ENCODE measurements at regions of chr10 and their contacts with region 1.

Region 1: DNA sequence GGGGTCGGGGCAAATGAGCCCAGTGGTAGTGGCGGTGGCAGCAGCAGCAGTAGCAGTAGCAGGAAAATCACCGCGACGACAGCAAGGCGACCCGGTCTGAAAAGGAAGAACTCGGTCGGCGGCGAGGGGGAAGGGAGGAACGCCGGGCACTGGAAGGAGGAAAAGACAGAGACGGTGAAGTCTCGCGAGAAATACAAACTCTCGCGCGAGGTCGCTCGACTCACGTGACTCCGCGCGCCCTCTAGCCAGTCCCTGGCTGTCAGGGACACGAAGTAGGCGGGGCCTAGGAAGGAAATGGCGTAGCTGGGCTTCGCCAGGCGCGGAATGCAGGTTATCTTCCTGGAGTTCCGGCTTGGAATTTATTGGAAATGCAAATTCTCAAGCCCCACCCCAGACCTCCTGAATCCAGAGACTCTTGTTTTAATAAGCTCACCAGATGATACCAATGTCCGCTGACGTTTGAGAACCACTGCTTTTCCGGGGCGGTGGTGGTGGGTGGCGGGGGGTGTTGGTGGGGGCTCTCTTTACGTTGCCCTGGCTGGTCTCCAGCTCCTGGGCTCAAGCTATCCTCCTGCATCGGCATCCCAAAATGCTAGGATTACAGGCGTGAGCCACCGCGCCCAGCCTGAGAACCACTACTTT is at the start of gene SMNDC1:
- DNase-seq: peak; percentile 96
- H3K4me3 Mint-ChIP-seq: peak within 1 kb of the TSS; percentile 97
- H3K27ac Mint-ChIP-seq: peak within 1 kb of the TSS; percentile 96
- H3K4me1 Mint-ChIP-seq: peaks cover 48% of the 10 kb centered on the region
- H3K27me3 Mint-ChIP-seq: no peaks in the 10 kb centered on the region
- total RNA-seq, gene SMNDC1: 47.8 and 48.0 TPM in 2 replicates

Region 2: GRCh38 chr10:110103921-110104461 is 200.9 kb before region 1 on chr10:
- intact Hi-C with region 1: no loop called
- DNase-seq: no peak
- H3K4me3 Mint-ChIP-seq: no peak overlapping the region
- H3K27ac Mint-ChIP-seq: peak overlapping the region; percentile 88
- H3K4me1 Mint-ChIP-seq: peaks cover 42% of the 10 kb centered on the region
- H3K27me3 Mint-ChIP-seq: no peaks in the 10 kb centered on the region

Region 3: DNA sequence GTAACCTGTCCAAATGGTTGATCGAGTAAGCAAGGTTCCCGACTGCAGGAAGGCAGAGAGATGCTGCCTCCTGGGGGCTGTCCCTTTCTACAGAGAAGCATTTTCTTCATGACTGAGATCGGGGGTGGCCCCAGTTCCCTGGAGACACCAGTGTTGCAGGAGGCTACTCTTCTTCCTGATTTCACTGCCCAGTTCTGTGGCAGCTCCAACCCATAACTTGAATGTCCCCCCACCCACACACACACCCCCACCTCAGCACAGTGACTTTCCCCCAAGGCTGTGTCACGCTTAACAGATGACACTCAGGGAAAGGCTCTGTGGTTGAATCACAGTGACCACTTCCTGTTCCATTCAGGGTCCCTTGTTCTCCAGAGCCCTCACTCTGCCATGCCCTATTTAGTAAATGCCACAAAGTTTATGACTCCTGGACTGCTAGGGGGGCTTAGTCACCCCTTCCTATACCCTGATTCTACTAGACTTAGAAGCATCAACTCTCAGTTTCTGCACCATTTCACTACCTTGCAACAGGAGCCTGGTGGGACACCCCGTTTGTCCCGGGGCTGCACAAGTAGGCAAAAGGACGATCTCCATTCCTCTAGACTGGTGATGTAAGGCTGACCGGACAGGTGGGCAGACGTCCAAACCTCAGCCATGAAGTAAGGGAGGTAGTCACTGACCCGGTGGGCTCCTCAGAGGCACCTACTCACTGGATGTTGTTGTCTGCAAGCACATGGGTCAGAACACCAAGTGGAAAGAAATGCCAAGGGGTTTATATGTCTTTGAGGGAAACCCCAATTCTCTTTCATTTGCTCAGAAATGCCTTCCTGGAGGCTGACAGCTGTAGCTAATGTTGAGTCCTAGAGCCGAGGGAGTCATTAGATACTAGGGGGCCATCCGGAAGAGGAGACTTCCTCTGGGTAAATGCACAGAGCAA is 231.3 kb after region 1 on chr10:
- intact Hi-C with region 1: loop called (anchors 1 kb)
- DNase-seq: peak; percentile 49
- H3K4me3 Mint-ChIP-seq: peak overlapping the region; percentile 48
- H3K27ac Mint-ChIP-seq: peak overlapping the region; percentile 89
- H3K4me1 Mint-ChIP-seq: peaks cover 60% of the 10 kb centered on the region
- H3K27me3 Mint-ChIP-seq: no peaks in the 10 kb centered on the region

Region 4: DNA sequence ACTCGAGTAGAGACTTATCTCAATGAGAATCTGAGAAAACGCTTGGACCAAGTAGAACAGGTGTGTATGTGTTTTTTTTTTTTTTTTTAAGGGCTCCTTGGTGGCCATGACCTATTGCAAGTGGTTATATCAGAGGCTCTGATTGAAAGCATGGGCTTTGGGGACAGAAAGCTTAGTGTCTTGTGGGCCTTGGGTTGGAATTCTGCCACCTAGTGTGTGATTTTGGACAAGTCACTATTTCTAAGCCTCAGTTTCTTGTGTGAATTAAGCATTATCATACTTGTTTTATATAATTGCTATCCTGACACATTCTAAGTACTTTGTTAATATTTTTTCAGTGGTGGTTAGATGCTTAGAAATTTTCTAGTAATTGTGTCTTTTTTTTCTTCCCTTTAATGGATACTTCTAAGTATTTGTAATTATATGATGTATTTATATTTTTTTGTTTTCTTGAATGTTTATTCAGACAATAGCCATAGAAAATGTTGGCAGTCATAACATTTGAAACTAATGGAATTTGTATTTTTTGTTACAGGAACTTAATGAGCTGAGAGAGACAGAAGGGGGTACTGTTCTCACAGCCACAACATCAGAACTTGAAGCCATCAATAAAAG is 295.7 kb after region 1 on chr10:
- intact Hi-C with region 1: loop called (anchors 1 kb)
- DNase-seq: peak; percentile 24
- H3K4me3 Mint-ChIP-seq: no peak overlapping the region
- H3K27ac Mint-ChIP-seq: no peak overlapping the region
- H3K4me1 Mint-ChIP-seq: no peaks in the 10 kb centered on the region
- H3K27me3 Mint-ChIP-seq: no peaks in the 10 kb centered on the region

Region 5: GRCh38 chr10:110746254-110746826 is 441.4 kb after region 1 on chr10:
- intact Hi-C with region 1: loop called (anchors 10 kb)
- DNase-seq: peak; percentile 19
- H3K4me3 Mint-ChIP-seq: no peak overlapping the region
- H3K27ac Mint-ChIP-seq: no peak overlapping the region
- H3K4me1 Mint-ChIP-seq: peaks cover 55% of the 10 kb centered on the region
- H3K27me3 Mint-ChIP-seq: no peaks in the 10 kb centered on the region

Measured in activated T-helper 1 cell treated with anti-CD3 and anti-CD28 coated beads, Interleukin-12 subunit alpha, Interleukin-12 subunit beta, Interleukin-2, Interleukin-4 antibody, amounts not matched to agents 30 ng/mL and 10 ng/mL and 1 ng/mL, durations not matched to agents 14 hours and 24 hours and 36 hours (primary cell).